Heart right ventricle (tissue), 16 donors: ENCODE measurements at regions of chr12 and their contacts with region 1.

Region 1: DNA sequence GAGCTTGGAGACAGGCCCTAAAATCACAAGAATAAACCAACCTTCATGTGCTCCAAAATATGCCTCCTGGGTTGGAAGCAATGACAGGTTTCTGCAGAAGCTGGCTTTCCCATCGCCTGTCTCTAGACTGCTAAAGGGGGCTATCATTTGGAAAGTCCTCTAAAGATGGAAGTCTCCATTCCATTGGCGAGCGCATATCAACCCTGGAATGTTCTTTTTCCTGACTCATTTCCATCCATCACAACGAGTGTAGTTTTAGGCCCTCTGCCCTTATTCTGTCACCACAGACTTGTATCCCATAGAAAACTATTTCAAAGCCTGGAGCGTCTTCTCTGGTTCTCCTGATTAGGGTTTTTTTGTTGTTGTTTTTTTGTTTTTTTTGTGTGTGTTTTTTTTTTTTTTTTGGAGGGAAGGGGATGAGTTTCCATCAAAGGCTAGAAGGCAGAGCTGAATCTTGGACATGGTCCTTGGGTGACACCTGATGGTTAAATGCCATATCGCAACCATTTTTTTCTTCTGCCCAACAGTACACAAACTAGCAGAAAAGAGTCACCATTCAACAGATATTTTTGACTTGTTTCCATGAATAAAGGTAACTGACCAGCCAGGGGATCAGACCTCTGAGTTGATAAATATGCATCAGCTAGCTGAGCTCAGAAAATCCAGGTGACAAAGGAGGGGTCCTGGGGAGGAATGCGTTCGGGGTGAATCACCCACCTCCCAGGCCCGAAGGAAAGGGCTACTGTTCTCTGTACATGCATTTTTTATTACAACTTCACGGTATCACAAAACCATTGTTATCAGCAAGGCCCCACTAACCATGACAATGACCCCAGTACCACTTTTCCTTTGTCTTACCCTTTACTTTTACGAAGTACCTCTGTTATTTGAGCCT is 40.5 kb downstream of the KCNA5 start:
- DNase-seq: peak in 1 of 2 donors; percentile 50
- ATAC-seq: peak in 6 of 8 donors; percentile 32 to 71 (median 54)
- H3K4me3 ChIP-seq: no peak overlapping the region
- H3K27ac ChIP-seq: no peak overlapping the region
- H3K4me1 ChIP-seq: peaks cover 0 to 5% (median under 1%) of the 10 kb centered on the region in 9 donors
- H3K27me3 ChIP-seq: peaks cover 0 to 4% (median 0%) of the 10 kb centered on the region in 7 donors
- CTCF ChIP-seq: peak; percentile 53 to 90 (median 82)

Region 2: DNA sequence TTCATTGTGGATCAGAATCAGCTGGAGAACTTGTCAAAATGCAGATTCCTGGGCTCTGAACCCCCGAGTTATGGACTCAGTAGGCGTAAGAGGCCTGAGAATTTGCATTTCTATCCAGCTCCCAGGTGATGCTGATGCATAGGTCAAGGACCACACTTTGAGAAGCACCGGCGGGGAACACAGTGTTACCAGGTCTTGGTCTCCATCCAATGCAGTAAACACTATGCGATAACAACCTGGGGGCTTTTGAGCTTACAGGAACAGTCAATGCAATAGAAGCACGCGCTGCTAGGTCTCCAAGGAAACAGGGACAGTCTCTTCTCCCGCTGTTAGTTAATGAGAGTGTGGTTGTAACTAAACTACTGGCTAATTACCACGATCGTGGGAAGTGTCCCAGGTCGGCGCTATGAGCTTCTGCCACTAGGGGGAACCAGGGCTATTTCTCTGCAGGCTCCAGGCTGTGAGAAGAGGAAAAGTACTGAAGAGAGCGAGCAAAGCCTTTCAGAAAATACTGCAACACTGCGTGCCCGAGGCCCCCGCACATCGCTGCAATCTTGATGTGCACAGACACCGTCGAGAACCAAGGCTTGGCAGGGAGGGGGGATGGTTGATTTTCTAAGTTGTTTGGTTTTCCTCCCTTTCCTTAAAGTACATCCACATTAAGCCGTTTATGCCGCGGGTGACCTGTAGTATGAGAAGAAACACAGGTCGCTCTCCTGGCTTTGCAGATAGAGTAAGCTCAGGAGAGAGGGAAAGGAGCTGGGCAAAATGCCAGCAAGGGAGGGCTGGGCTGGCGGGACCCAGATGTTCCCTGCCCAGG is 226.5 kb before region 1 on chr12:
- intact Hi-C with region 1: loop called (anchors 2 to 10 kb)
- DNase-seq: peak; percentile 65 to 67
- ATAC-seq: peak; percentile 73 to 91 (median 84)
- H3K4me3 ChIP-seq: peak overlapping the region in 6 of 10 donors; percentile 9 to 33 (median 30)
- H3K27ac ChIP-seq: peak overlapping the region in 1 of 10 donors; percentile 8
- H3K4me1 ChIP-seq: peaks cover 2 to 34% (median 19%) of the 10 kb centered on the region in 9 donors
- H3K27me3 ChIP-seq: peaks cover 0 to 15% (median 9%) of the 10 kb centered on the region in 7 donors
- CTCF ChIP-seq: peak; percentile 76 to 91 (median 86)

Region 3: DNA sequence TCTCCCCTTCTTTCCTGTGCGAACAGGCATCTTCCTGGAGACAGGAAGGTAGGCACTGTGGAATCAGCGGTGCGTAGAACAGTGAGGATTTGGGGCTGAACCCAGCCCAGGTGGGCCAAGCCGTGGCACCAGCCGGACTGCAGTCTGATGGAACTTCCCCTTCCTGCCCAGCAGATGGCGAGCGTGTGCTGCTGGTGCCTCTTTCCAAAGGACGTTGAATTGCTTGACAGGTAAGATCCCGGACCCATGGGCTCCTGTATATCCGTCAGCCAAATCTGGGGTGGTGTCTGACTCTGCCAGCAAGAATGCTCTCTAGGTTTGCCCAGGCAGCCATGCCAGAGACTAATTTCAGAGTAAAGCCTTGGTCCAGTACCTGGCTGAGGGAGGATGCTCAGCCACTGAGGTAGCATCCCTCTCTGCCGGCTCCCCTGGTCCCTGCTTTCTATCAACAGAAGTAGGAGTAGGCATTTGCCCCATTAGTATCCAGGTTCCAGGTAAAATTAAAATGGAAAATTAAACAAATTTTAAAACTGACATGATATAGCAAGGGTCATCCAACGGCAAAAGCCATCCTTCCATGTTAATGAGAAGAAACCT is 61.6 kb before region 1 on chr12:
- intact Hi-C with region 1: loop called (anchors 1 to 2 kb)
- DNase-seq: peak; percentile 33 to 47
- ATAC-seq: peak in 7 of 8 donors; percentile 12 to 68 (median 56)
- H3K4me3 ChIP-seq: no peak overlapping the region
- H3K27ac ChIP-seq: no peak overlapping the region
- H3K4me1 ChIP-seq: peaks cover 0 to 28% (median 7%) of the 10 kb centered on the region in 9 donors
- H3K27me3 ChIP-seq: peaks cover 0 to 4% (median 0%) of the 10 kb centered on the region in 7 donors
- CTCF ChIP-seq: peak; percentile 89 to 98 (median 94)

Region 4: GRCh38 chr12:5047094-5047493 is 37.1 kb before region 1 on chr12:
- intact Hi-C with region 1: loop called in 1 of 10 experiments (anchors 5 kb)
- DNase-seq: no peak
- ATAC-seq: peak in 5 of 8 donors; percentile 36 to 71 (median 65)
- H3K4me3 ChIP-seq: peak overlapping the region in 7 of 10 donors; percentile 13 to 59 (median 54)
- H3K27ac ChIP-seq: peak overlapping the region in 7 of 10 donors; percentile 4 to 80 (median 41)
- H3K4me1 ChIP-seq: peaks cover 11 to 59% (median 28%) of the 10 kb centered on the region in 9 donors
- H3K27me3 ChIP-seq: peaks cover 0 to 39% (median 16%) of the 10 kb centered on the region in 7 donors
- CTCF ChIP-seq: no peak

Region 5: DNA sequence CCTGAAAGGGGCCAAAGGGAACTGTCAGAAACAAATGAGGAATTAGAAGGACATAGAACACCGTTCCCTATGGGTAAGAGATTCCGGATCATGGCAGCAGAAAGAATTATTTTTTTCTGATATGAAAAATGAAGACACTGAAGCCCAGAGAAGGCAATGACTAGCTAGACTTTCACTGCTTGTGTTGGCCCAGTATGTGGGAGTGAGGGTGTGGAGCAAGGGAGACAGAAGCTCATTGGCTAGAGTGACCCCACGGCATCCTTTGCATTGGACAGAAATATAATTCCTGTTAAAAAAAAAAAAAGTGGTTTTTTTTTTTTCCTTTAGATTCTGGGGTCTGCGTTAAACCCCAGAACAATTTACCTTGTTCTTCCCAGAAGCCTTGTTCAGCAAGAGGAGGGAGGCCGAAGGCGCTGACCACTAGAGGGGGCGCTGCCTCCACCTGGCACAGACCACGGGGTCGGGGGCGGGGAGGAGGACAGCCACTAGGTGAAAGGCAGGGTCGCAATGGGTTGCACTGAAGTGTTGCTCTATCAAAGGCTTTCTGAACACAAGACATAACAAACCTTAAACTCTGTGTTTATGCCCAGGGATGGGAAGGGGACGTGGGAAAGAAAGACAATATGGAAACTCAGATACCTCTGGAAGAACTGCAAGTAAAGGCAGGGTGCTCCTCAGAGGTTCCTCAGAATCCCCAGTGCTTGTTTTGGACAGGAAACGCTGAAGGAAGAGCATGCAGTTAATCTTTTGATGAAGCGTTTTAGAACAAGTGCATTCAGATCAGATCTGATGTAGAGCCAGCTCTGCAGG is 116.3 kb after region 1 on chr12:
- intact Hi-C with region 1: no loop called
- DNase-seq: peak; percentile 33 to 65
- ATAC-seq: peak in 7 of 8 donors; percentile 61 to 84 (median 81)
- H3K4me3 ChIP-seq: no peak overlapping the region
- H3K27ac ChIP-seq: no peak overlapping the region
- H3K4me1 ChIP-seq: peaks cover 0 to 5% (median 0%) of the 10 kb centered on the region in 9 donors
- H3K27me3 ChIP-seq: peaks cover 0 to 36% (median 11%) of the 10 kb centered on the region in 7 donors
- CTCF ChIP-seq: peak; percentile 47 to 84 (median 79)